Tibial artery (tissue), 4 donors: ENCODE measurements at regions of chr2 and their contacts with region 1.

Region 1: DNA sequence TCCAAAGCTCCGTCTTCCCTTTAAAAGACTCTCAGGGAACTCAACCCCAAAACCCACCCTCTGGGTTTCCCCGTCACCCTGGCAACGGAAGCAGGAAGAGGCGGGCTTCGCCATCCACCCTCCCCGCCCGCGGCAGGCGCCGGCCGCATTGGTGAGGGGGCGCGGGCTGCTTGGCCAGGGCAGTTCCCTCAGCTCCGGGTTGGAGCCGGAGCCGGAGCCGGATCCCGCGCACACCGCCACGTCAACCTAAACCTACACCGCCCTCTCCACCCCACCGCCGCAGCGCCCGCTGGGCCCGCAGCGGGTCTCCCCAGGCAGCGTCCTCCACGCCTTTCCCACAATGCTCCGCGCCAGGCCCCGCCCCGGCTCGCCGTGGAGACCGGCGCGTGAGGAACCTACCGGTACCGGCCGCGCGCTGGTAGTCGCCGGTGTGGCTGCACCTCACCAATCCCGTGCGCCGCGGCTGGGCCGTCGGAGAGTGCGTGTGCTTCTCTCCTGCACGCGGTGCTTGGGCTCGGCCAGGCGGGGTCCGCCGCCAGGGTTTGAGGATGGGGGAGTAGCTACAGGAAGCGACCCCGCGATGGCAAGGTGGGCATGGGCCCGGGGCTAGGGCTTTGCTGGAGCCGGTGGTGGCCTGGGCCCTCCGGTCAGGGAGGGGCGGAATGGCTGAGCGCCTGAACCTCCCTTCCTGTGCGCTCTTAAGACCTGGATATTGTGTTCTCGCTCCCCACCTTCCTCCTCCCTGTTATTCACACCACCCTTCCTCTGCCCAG is at the start of gene DNAJC10:
- DNase-seq: peak; percentile 86 to 92
- H3K4me3 ChIP-seq: peak within 1 kb of the TSS; percentile 90 to 98
- H3K27ac ChIP-seq: peak within 1 kb of the TSS; percentile 82 to 88
- H3K4me1 ChIP-seq: peaks cover 0 to 32% (median 9%) of the 10 kb centered on the region in 4 donors
- H3K27me3 ChIP-seq: no peaks in the 10 kb centered on the region
- CTCF ChIP-seq: peak in 1 of 2 experiments; percentile 9

Region 2: GRCh38 chr2:181891258-181891965 is 824.7 kb before region 1 on chr2 and contains the start of gene ITPRID2:
- intact Hi-C with region 1: loop called (anchors 10 kb)
- DNase-seq: peak; percentile 84 to 92
- H3K4me3 ChIP-seq: peak within 1 kb of the TSS; percentile 93 to 97
- H3K27ac ChIP-seq: peak within 1 kb of the TSS; percentile 98
- H3K4me1 ChIP-seq: peaks cover 0 to 57% (median 16%) of the 10 kb centered on the region in 4 donors
- H3K27me3 ChIP-seq: no peaks in the 10 kb centered on the region
- CTCF ChIP-seq: peak in 1 of 2 experiments; percentile 58

Region 3: GRCh38 chr2:182814804-182815203 is 98.7 kb after region 1 on chr2:
- intact Hi-C with region 1: no loop called
- DNase-seq: no peak
- H3K4me3 ChIP-seq: no peak overlapping the region
- H3K27ac ChIP-seq: no peak overlapping the region
- H3K4me1 ChIP-seq: peaks cover 0 to 26% (median 2%) of the 10 kb centered on the region in 4 donors
- H3K27me3 ChIP-seq: no peaks in the 10 kb centered on the region
- CTCF ChIP-seq: no peak